MCF 10A (cell line): ENCODE measurements at regions of chr4 and their contacts with region 1.

Region 1: GRCh38 chr4:83110223-83110945 is 4.1 kb downstream of the PLAC8 start:
- DNase-seq: peak; percentile 79
- H3K4me3 Mint-ChIP-seq: peak overlapping the region; percentile 68
- H3K27ac Mint-ChIP-seq: peak overlapping the region; percentile 79
- H3K4me1 Mint-ChIP-seq: peaks cover 25% of the 10 kb centered on the region
- H3K27me3 Mint-ChIP-seq: no peaks in the 10 kb centered on the region
- CTCF ChIP-seq: peak; percentile 44

Region 2: GRCh38 chr4:83124111-83124780 is 13.9 kb after region 1 on chr4:
- CTCF ChIA-PET with region 1: interaction called, 16 read pairs
- POLR2A ChIA-PET with region 1: interaction called, 12 read pairs
- intact Hi-C with region 1: no loop called
- DNase-seq: no peak
- H3K4me3 Mint-ChIP-seq: no peak overlapping the region
- H3K27ac Mint-ChIP-seq: no peak overlapping the region
- H3K4me1 Mint-ChIP-seq: peaks cover 9% of the 10 kb centered on the region
- H3K27me3 Mint-ChIP-seq: no peaks in the 10 kb centered on the region
- CTCF ChIP-seq: no peak

Region 3: DNA sequence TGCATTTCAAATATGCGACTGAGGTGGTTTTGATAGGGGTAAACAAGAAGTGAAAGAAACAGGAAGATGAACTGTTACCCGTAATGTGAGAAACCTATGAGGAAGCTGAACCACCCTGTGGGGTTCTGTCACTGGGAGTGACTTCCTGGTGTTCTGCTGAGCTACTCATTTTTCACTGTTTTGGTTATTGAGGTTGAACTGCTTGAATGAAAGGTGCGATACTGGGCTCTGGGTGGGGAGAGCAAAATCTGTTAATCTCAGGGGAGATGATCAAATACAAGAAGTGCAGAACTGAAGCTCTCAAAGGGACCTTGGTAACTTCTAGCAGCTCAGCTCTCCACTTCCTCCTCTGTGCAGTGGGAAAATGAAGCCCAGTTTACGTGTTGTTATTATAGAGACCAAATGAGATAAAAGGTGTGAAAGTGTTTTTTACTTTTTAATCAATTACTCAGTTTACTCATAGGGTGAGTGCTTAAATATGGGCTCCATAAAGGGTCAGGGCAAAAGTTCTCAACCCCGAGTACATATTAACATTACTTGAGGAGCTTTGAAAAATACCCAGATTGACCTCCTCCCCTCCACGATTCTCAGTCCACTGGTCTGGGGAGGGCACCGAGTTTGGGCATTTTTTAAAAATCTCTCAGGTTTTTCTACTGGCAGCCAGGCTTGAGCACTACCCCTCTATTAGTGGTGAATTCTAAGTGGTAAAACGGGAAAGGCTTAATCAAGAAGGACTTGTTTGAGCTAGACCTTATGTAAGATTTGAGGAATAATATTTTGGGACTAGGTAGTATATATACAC is 107.5 kb after region 1 on chr4:
- CTCF ChIA-PET with region 1: interaction called, 5 read pairs
- POLR2A ChIA-PET with region 1: interaction called, 10 read pairs
- intact Hi-C with region 1: no loop called
- DNase-seq: no peak
- H3K4me3 Mint-ChIP-seq: no peak overlapping the region
- H3K27ac Mint-ChIP-seq: peak overlapping the region; percentile 93
- H3K4me1 Mint-ChIP-seq: peaks cover 26% of the 10 kb centered on the region
- H3K27me3 Mint-ChIP-seq: no peaks in the 10 kb centered on the region
- CTCF ChIP-seq: no peak

Region 4: DNA sequence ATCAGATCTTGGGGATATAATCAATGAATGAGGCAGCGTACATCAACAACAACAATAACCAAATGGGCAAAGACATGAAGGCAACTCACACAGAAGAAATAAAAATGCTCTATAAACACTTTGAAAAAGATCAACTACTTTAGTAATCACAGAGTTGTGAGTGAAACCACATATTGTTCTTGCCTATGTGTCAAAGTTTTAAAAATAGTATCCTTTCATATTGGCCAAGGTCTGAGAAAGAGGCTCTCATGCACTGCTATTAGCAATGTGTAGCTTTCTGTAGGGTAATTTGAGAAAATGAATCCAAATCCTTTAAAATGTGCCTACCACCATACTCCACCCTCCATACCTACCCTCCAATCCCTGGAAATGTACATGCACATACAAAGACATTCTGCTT is 149.2 kb after region 1 on chr4:
- CTCF ChIA-PET with region 1: interaction called, 4 read pairs
- POLR2A ChIA-PET with region 1: interaction called, 6 read pairs
- intact Hi-C with region 1: loop called (anchors 2 kb)
- DNase-seq: no peak
- H3K4me3 Mint-ChIP-seq: no peak overlapping the region
- H3K27ac Mint-ChIP-seq: no peak overlapping the region
- H3K4me1 Mint-ChIP-seq: peaks cover 13% of the 10 kb centered on the region
- H3K27me3 Mint-ChIP-seq: no peaks in the 10 kb centered on the region
- CTCF ChIP-seq: no peak